ENCODE measurements at regions of chr6 and their contacts with region 1.

Region 1: DNA sequence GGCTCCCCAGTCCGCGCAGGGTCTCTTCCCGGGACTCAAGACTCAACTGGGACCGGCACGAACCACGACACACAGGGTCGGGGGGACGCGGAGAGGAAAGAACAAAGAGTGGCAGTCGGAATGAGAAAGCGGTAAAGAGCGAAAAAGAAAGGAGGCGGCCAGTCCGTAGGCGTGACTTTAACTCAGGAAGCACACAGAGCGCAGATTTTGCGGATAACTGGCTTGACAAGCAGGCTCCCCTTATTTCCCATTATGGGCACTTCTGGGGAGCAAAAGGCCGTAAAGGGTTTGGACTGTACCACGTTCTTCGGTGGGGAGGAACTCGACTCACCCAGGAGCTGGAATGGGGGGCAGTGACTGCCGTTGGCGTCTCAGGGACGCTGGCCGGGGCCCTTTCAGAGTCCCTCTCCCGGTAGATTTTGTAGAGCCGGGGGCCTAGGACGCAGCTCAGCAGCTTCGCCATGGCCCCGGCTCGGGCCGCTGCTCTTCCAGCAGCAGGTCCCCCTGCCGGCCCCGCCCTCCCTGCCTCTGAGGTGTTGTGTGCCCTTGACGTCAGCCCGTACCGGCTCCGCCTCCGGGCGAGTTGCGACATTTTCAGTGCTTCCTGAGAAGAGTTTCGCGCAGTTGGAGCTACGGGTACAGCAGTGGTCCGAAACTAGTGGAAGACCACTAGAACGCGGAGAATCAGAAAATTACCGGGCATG is at the start of gene ABHD16A:
- DNase-seq: peak; percentile 97 to 98
- H3K4me3 ChIP-seq: peak within 1 kb of the TSS; percentile 50
- H3K4me3 Mint-ChIP-seq: peak within 1 kb of the TSS; percentile 91
- H3K27ac Mint-ChIP-seq: peak within 1 kb of the TSS; percentile 87
- H3K4me1 ChIP-seq: peaks cover 34% of the 10 kb centered on the region
- H3K4me1 Mint-ChIP-seq: peaks cover 11% of the 10 kb centered on the region
- H3K27me3 ChIP-seq: no peaks in the 10 kb centered on the region
- H3K27me3 Mint-ChIP-seq: no peaks in the 10 kb centered on the region
- CTCF ChIP-seq: no peak
- total RNA-seq, gene ABHD16A: 62.7 and 63.2 TPM in 2 replicates

Region 2: GRCh38 chr6:31680840-31681671 is 21.9 kb before region 1 on chr6 and contains the start of gene LY6G5C:
- CTCF ChIA-PET with region 1: interaction called, 3 read pairs
- POLR2A ChIA-PET with region 1: interaction called, 5 read pairs
- intact Hi-C with region 1: loop called (anchors 2 kb)
- DNase-seq: peak; percentile 85 to 87
- H3K4me3 ChIP-seq: peak within 1 kb of the TSS; percentile 49
- H3K4me3 Mint-ChIP-seq: peak within 1 kb of the TSS; percentile 76
- H3K27ac Mint-ChIP-seq: peak within 1 kb of the TSS; percentile 54
- H3K4me1 ChIP-seq: peaks cover 25% of the 10 kb centered on the region
- H3K4me1 Mint-ChIP-seq: peaks cover 17% of the 10 kb centered on the region
- H3K27me3 ChIP-seq: no peaks in the 10 kb centered on the region
- H3K27me3 Mint-ChIP-seq: no peaks in the 10 kb centered on the region
- CTCF ChIP-seq: peak; percentile 66 to 81
- total RNA-seq, gene LY6G5C: 2.0 and 2.9 TPM in 2 replicates

Region 3: GRCh38 chr6:31713991-31714684 is 11.2 kb after region 1 on chr6:
- CTCF ChIA-PET with region 1: no interaction called
- POLR2A ChIA-PET with region 1: interaction called, 11 read pairs
- intact Hi-C with region 1: no loop called
- DNase-seq: peak; percentile 52 to 77
- H3K4me3 ChIP-seq: 0 out of 2 replicates have a peak overlapping the region, but pooled peaks have one; percentile 5
- H3K4me3 Mint-ChIP-seq: peak overlapping the region; percentile 65
- H3K27ac Mint-ChIP-seq: peak overlapping the region; percentile 98
- H3K4me1 ChIP-seq: peaks cover 44% of the 10 kb centered on the region
- H3K4me1 Mint-ChIP-seq: peaks cover 50% of the 10 kb centered on the region
- H3K27me3 ChIP-seq: no peaks in the 10 kb centered on the region
- H3K27me3 Mint-ChIP-seq: no peaks in the 10 kb centered on the region
- CTCF ChIP-seq: no peak